Activated naive CD4-positive, alpha-beta T cell treated with anti-CD3 and anti-CD28 coated beads for 36 hours (primary cell): ENCODE measurements at regions of chr1 and their contacts with region 1.

Region 1: DNA sequence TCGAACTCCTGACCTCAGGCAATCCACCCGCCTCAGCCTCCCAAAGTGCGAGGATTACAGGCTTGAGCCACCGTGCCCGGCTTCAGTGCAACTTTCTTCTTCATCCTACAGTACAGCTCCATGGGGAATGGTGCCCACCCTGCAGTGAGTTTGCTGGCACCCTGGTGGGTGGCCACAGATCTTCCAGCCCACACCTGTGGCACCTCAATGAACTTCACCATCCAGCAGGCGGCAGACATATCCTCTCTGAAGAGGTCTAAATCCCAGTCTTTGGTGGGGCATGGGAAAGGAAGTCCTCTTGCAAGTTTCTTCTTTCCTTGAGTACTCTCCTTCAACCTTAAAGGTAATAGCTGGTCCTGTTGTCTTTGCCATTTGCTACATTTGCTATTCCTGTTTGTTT is 18.1 kb upstream of the ZBTB8A start:
- DNase-seq: no peak
- H3K4me3 Mint-ChIP-seq: peak overlapping the region; percentile 66
- H3K27ac Mint-ChIP-seq: no peak overlapping the region
- H3K4me1 Mint-ChIP-seq: peaks cover 3% of the 10 kb centered on the region
- H3K27me3 Mint-ChIP-seq: no peaks in the 10 kb centered on the region

Region 2: DNA sequence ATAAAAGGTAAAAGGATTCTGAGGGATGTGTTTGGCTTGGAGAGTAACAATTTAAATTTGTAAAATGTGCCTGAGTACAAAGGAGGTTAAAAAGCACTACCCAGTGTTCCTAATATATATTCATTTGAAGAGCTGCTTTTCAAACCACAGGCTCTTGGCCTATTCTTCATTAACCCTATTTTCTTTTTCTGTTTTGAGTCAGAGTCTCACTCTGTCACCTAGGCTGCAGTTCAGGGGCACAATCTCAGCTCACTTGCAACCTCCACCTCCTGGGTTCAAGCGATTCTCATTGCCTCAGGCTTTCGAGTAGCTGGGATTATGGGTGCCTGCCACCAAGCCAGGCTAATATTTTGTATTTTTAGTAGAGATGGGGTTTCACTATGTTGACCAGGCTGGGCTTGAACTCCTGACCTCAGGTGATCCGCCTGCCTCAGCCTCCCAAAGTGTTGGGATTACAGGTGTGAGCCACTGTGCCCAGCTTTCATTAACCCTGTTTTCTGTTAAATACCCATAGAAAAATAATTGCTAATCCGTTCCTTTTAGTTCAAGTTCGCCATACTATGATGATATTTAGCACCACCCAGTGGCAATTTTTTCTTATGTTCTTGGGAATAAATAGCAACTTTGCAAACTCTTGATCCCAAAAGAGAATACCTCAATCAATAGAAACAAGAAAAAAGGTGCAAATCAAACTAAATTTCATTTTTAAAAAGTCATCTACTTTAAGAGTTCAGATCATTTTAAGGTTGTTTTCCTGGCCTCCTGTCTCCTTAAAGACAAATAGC is 98.7 kb after region 1 on chr1:
- CTCF ChIA-PET with region 1: interaction called, 7 read pairs
- intact Hi-C with region 1: loop called (anchors 2 kb)
- DNase-seq: no peak
- H3K4me3 Mint-ChIP-seq: no peak overlapping the region
- H3K27ac Mint-ChIP-seq: no peak overlapping the region
- H3K4me1 Mint-ChIP-seq: peaks cover 36% of the 10 kb centered on the region
- H3K27me3 Mint-ChIP-seq: no peaks in the 10 kb centered on the region

Region 3: GRCh38 chr1:32684167-32684811 is 163.1 kb after region 1 on chr1:
- CTCF ChIA-PET with region 1: interaction called, 10 read pairs
- intact Hi-C with region 1: no loop called
- DNase-seq: no peak
- H3K4me3 Mint-ChIP-seq: no peak overlapping the region
- H3K27ac Mint-ChIP-seq: peak overlapping the region; percentile 76
- H3K4me1 Mint-ChIP-seq: peaks cover 15% of the 10 kb centered on the region
- H3K27me3 Mint-ChIP-seq: no peaks in the 10 kb centered on the region

Region 4: DNA sequence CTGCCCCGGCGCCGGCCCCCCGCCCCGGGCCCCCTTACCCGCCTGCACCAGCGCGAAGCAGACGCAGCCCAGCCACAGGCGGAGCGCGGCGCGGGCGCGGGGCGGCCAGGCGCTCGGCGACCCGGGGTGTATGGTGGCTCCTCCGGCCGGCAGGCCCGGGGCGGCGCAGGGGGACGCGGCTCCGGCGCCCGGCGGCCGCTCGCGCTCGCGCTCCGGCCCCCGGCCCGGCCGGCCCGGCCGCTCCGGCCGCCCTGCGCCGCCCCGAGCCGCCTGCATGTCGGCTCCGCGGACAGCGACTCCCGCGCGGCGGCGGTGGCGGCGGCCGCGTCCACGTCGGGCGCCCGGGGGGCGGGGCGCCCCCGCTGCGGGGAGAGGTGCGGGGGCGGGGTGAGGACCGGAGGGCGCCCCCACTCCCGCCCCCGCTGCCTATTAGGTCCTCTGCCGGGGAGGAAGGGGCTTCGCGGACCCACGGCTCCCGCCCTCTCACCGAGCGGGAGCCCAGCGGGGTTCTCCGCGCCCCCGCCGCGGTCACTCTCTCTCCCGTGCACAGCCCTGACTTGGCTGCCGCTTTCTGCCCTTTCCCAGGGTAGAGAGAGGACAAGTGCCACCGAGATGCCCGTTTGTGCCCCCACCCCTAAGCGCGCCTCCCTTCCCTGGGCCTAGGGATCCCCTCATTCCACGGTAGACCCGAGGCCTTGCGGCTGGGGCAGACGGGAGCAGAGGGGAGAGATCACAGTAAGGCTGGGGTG is 349.6 kb after region 1 on chr1 and contains the start of gene FNDC5:
- CTCF ChIA-PET with region 1: interaction called, 4 read pairs
- intact Hi-C with region 1: loop called (anchors 2 kb)
- DNase-seq: no peak
- H3K4me3 Mint-ChIP-seq: peak within 1 kb of the TSS; percentile 35
- H3K27ac Mint-ChIP-seq: no peak within 1 kb of the TSS
- H3K4me1 Mint-ChIP-seq: peaks cover 6% of the 10 kb centered on the region
- H3K27me3 Mint-ChIP-seq: peaks cover 39% of the 10 kb centered on the region
- total RNA-seq, gene FNDC5: not detected